GM12878 (cell line): ENCODE measurements at regions of chr12 and their contacts with region 1.

Region 1: DNA sequence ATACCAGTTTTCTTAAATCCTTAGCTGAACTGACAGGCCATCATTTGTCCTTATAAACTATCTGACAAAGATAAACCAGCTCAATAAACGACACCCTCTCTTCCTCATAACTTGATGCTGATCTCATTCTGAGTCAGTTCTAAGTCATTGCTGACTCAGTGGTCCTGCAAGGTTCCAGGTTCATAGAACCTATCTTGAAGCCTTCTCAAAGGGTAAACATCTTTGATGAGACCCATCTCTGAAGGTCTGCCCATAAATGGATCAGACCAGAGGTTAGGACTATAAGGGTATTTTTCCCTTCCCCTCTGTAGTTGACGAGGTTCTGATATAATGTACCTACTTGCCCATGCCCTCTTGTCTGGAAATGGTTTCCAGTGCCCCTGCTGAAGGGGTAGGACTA is 11.9 kb downstream of the NAA25 start:
- DNase-seq: no peak
- ATAC-seq: peak; percentile 67
- H3K4me3 ChIP-seq: peak overlapping the region; percentile 29; the same call in 1 of the 2 replicates
- H3K27ac ChIP-seq: peak overlapping the region; percentile 75
- H3K4me1 ChIP-seq: peaks cover 20% of the 10 kb centered on the region
- H3K27me3 ChIP-seq: no peaks in the 10 kb centered on the region
- CTCF ChIP-seq: no peak
- EP300 ChIP-seq: no peak
- POLR2A ChIP-seq: no peak
- RAD21 ChIP-seq: no peak

Region 2: GRCh38 chr12:111942557-111942956 is 154.1 kb before region 1 on chr12:
- CTCF ChIA-PET with region 1: no interaction called
- POLR2A ChIA-PET with region 1: no interaction called
- RAD21 ChIA-PET with region 1: no interaction called
- SMC1A ChIA-PET with region 1: no interaction called
- in situ Hi-C with region 1: no loop called
- intact Hi-C with region 1: no loop called
- DNase-seq: no peak
- ATAC-seq: no peak
- H3K4me3 ChIP-seq: no peak overlapping the region
- H3K27ac ChIP-seq: no peak overlapping the region
- H3K4me1 ChIP-seq: no peaks in the 10 kb centered on the region; the same call in 1 of the 2 replicates
- H3K27me3 ChIP-seq: no peaks in the 10 kb centered on the region
- CTCF ChIP-seq: no peak
- EP300 ChIP-seq: no peak
- POLR2A ChIP-seq: no peak
- RAD21 ChIP-seq: no peak

Region 3: GRCh38 chr12:112125250-112125999 is 28.8 kb after region 1 on chr12 and contains the start of gene TRAFD1:
- CTCF ChIA-PET with region 1: interaction called, 4 read pairs
- POLR2A ChIA-PET with region 1: interaction called, 10 read pairs
- RAD21 ChIA-PET with region 1: interaction called, 4 read pairs
- SMC1A ChIA-PET with region 1: interaction called, 5 read pairs
- in situ Hi-C with region 1: no loop called
- intact Hi-C with region 1: no loop called
- DNase-seq: peak; percentile 92
- ATAC-seq: peak; percentile 99
- H3K4me3 ChIP-seq: peak within 1 kb of the TSS; percentile 98
- H3K27ac ChIP-seq: peak within 1 kb of the TSS; percentile 72
- H3K4me1 ChIP-seq: peaks cover 19% of the 10 kb centered on the region
- H3K27me3 ChIP-seq: no peaks in the 10 kb centered on the region
- CTCF ChIP-seq: no peak
- EP300 ChIP-seq: no peak
- POLR2A ChIP-seq: peak; percentile 100
- RAD21 ChIP-seq: no peak
- polyA plus RNA-seq, gene TRAFD1: 42.3 to 43.8 TPM